Pancreas (tissue), 10 donors: ENCODE measurements at regions of chr3 and their contacts with region 1.

Region 1: GRCh38 chr3:69161587-69162307 is 39.4 kb upstream of the LMOD3 start:
- DNase-seq: peak in 2 of 6 donors; percentile 17 to 39
- ATAC-seq: peak; percentile 60 to 93 (median 88)
- H3K4me3 ChIP-seq: no peak overlapping the region
- H3K27ac ChIP-seq: no peak overlapping the region
- H3K4me1 ChIP-seq: peaks cover 0 to under 1% (median 0%) of the 10 kb centered on the region in 3 donors
- H3K27me3 ChIP-seq: no peaks in the 10 kb centered on the region
- CTCF ChIP-seq: peak; percentile 69 to 87 (median 80)

Region 2: GRCh38 chr3:68706096-68706495 is 455.7 kb before region 1 on chr3:
- intact Hi-C with region 1: no loop called
- DNase-seq: no peak
- ATAC-seq: no peak
- H3K4me3 ChIP-seq: no peak overlapping the region
- H3K27ac ChIP-seq: no peak overlapping the region
- H3K4me1 ChIP-seq: no peaks in the 10 kb centered on the region
- H3K27me3 ChIP-seq: no peaks in the 10 kb centered on the region
- CTCF ChIP-seq: no peak

Region 3: DNA sequence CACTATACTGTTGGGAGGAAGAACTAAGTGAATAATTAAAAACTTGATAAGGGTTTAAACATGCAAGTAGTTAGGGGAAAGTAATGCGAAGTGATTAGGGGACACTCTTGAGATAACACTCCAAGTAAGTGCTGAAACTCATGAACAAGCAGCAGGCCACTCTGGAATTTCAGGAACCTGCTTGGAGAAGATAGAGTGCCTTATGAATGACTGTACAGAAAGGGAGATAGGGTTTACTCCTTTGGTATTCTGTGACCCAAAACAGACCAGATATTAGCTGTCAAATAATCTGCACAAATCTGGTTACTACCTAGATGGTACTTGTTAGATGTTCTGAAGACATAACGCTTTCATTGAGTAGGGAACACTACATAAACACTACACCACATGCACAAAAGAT is 138.5 kb after region 1 on chr3:
- intact Hi-C with region 1: loop called in 2 of 3 experiments (anchors 5 kb)
- DNase-seq: no peak
- ATAC-seq: no peak
- H3K4me3 ChIP-seq: no peak overlapping the region
- H3K27ac ChIP-seq: no peak overlapping the region
- H3K4me1 ChIP-seq: no peaks in the 10 kb centered on the region
- H3K27me3 ChIP-seq: no peaks in the 10 kb centered on the region
- CTCF ChIP-seq: no peak

Region 4: GRCh38 chr3:69306239-69307185 is 144.8 kb after region 1 on chr3:
- intact Hi-C with region 1: loop called in 2 of 3 experiments (anchors 5 kb)
- DNase-seq: peak in 5 of 6 donors; percentile 45 to 72 (median 55)
- ATAC-seq: peak; percentile 91 to 99 (median 98)
- H3K4me3 ChIP-seq: no peak overlapping the region
- H3K27ac ChIP-seq: no peak overlapping the region
- H3K4me1 ChIP-seq: no peaks in the 10 kb centered on the region
- H3K27me3 ChIP-seq: no peaks in the 10 kb centered on the region
- CTCF ChIP-seq: peak; percentile 77 to 95 (median 88)